T-cell (primary cell): ENCODE measurements at regions of chr14 and their contacts with region 1.

Region 1: DNA sequence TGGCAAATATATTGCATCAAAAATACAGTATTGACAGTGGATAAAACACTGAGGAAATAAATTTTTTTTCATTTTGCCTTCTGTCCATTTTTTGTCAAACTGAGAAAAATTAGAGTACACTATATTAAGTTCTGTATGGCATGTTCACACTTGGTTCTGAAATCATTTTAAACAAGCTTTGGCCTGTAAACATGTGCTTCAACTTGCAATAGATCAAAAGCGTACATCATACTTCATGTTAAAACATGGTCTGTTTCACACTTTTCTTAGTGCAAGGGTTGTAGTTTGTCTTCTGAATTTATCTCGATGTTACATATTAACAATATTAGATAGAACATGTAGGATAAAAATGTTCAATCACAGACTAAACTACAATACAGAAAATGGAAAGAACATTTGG is 208.0 kb downstream of the PCNX1 start:
- DNase-seq: no peak
- ATAC-seq: no peak
- H3K4me3 ChIP-seq: no peak overlapping the region
- H3K4me3 Mint-ChIP-seq: no peak overlapping the region
- H3K27ac ChIP-seq: no peak overlapping the region
- H3K27ac Mint-ChIP-seq: no peak overlapping the region
- H3K4me1 ChIP-seq: no peaks in the 10 kb centered on the region
- H3K4me1 Mint-ChIP-seq: peaks cover 0 to 15% (median 9%) of the 10 kb centered on the region in 3 donors
- H3K27me3 ChIP-seq: no peaks in the 10 kb centered on the region
- H3K27me3 Mint-ChIP-seq: no peaks in the 10 kb centered on the region

Region 2: DNA sequence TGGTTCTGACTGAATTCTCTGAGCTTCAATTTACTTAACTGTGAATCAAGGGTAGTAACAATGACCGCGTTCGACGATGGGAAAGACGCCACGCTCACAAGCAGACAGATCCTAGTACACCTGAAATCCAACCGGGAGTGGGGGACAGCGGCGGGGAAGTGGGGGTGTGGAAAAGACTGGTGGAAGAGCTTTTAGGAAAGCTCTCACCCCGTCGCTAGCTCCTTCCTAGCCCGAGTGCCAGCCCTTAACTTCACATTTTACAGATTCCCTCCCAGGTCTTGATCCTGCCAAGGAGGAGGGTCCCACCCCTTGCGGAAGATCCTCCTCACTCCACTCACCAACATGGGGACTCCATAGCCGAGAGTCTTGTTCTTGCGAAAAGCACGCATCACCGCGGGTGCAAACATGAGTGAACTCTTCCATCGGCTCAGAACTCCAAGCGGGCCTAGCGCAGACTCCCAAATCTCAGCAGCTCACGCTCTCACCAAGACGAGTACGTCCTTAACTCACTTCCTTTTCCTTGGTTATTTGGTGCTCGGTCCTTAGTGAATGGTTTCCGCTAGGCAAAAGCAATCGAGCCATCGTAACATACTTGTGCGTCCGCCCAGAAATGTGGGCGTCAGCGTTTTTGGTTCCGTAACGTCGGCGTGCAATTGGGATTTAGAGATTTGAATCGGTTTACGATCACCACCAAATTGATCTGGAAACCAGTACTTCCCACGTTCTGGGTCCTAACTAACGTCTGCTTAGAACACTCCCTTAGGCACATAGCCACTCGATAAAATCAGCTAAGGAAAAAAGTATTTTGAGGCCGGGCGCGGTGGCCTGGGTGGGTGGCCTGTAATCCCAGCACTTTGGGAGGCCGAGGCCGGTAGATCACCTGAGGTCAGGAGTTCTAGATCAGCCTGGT is 755.9 kb before region 1 on chr14 and contains the start of gene COX16:
- CTCF ChIA-PET with region 1: no interaction called
- POLR2A ChIA-PET with region 1: interaction called in 1 of 2 experiments, 11 read pairs
- DNase-seq: peak; percentile 60 to 93 (median 74)
- ATAC-seq: peak; percentile 94 to 98 (median 96)
- H3K4me3 ChIP-seq: peak within 1 kb of the TSS; percentile 93 to 98
- H3K4me3 Mint-ChIP-seq: peak within 1 kb of the TSS; percentile 99 to 100 (median 100)
- H3K27ac ChIP-seq: peak within 1 kb of the TSS; percentile 64
- H3K27ac Mint-ChIP-seq: peak within 1 kb of the TSS; percentile 94 to 98
- H3K4me1 ChIP-seq: peaks cover 10 to 20% of the 10 kb centered on the region in 2 experiments
- H3K4me1 Mint-ChIP-seq: peaks cover 44 to 54% (median 47%) of the 10 kb centered on the region in 3 donors
- H3K27me3 ChIP-seq: no peaks in the 10 kb centered on the region
- H3K27me3 Mint-ChIP-seq: no peaks in the 10 kb centered on the region
- total RNA-seq, gene COX16: 13.4 to 25.5 (median 20.3) TPM

Region 3: DNA sequence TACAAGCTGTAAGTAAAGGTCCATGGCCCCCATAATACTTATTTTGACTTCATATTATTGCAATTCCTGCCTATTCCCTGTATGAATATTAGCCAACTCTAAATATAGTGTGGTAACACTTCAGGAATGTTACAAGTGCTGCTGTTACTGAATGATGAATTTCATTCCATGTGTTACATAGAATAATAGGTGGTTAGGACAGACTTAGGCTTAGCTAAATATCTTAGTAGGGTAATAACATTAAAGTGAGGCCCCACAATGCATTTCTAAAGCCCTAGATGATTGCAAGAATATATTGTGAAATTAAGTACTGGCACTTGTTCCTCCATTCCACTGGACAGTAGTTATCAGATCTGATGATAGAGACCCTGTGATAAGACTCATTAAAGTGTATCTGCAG is 25.3 kb before region 1 on chr14:
- CTCF ChIA-PET with region 1: interaction called, 3 to 17 read pairs
- POLR2A ChIA-PET with region 1: no interaction called
- DNase-seq: no peak
- ATAC-seq: no peak
- H3K4me3 ChIP-seq: no peak overlapping the region
- H3K4me3 Mint-ChIP-seq: no peak overlapping the region
- H3K27ac ChIP-seq: no peak overlapping the region
- H3K27ac Mint-ChIP-seq: no peak overlapping the region
- H3K4me1 ChIP-seq: no peaks in the 10 kb centered on the region
- H3K4me1 Mint-ChIP-seq: peaks cover 0 to 9% (median 0%) of the 10 kb centered on the region in 3 donors
- H3K27me3 ChIP-seq: no peaks in the 10 kb centered on the region
- H3K27me3 Mint-ChIP-seq: no peaks in the 10 kb centered on the region

Region 4: GRCh38 chr14:71130491-71131179 is 15.3 kb after region 1 on chr14:
- CTCF ChIA-PET with region 1: no interaction called
- POLR2A ChIA-PET with region 1: no interaction called
- DNase-seq: peak in 2 of 35 experiments; percentile 3 to 18
- ATAC-seq: no peak
- H3K4me3 ChIP-seq: no peak overlapping the region
- H3K4me3 Mint-ChIP-seq: no peak overlapping the region
- H3K27ac ChIP-seq: no peak overlapping the region
- H3K27ac Mint-ChIP-seq: no peak overlapping the region
- H3K4me1 ChIP-seq: peaks cover 0 to 2% of the 10 kb centered on the region in 2 experiments
- H3K4me1 Mint-ChIP-seq: peaks cover 6 to 11% (median 10%) of the 10 kb centered on the region in 3 donors
- H3K27me3 ChIP-seq: no peaks in the 10 kb centered on the region
- H3K27me3 Mint-ChIP-seq: no peaks in the 10 kb centered on the region

Region 5: GRCh38 chr14:72420725-72421474 is 1305.6 kb after region 1 on chr14:
- CTCF ChIA-PET with region 1: no interaction called
- POLR2A ChIA-PET with region 1: interaction called in 1 of 2 experiments, 23 read pairs
- DNase-seq: peak in 31 of 35 experiments; percentile 6 to 63 (median 47)
- ATAC-seq: no peak
- H3K4me3 ChIP-seq: no peak overlapping the region
- H3K4me3 Mint-ChIP-seq: no peak overlapping the region
- H3K27ac ChIP-seq: no peak overlapping the region
- H3K27ac Mint-ChIP-seq: no peak overlapping the region
- H3K4me1 ChIP-seq: no peaks in the 10 kb centered on the region
- H3K4me1 Mint-ChIP-seq: peaks cover 0 to 5% (median 1%) of the 10 kb centered on the region in 3 donors
- H3K27me3 ChIP-seq: peaks cover 0 to 19% of the 10 kb centered on the region in 2 experiments
- H3K27me3 Mint-ChIP-seq: peaks cover 3 to 5% of the 10 kb centered on the region in 2 donors